H1 (cell line): ENCODE measurements at regions of chr6 and their contacts with region 1.

Region 1: GRCh38 chr6:161418463-161418945 is 144.6 kb upstream of the AGPAT4 start:
- DNase-seq: no peak
- H3K4me3 ChIP-seq: no peak overlapping the region
- H3K27ac ChIP-seq: no peak overlapping the region
- H3K4me1 ChIP-seq: peaks cover 0 to 4% (median under 1%) of the 10 kb centered on the region in 4 experiments; a peak in 3 of 7 replicates
- H3K27me3 ChIP-seq: no peaks in the 10 kb centered on the region
- CTCF ChIP-seq: peak in 2 of 3 experiments; percentile 57 to 69; a peak in 3 of 4 replicates
- EP300 ChIP-seq: no peak
- POLR2A ChIP-seq: no peak
- RAD21 ChIP-seq: peak; percentile 76 to 80

Region 2: GRCh38 chr6:161198176-161198575 is 220.3 kb before region 1 on chr6:
- CTCF ChIA-PET with region 1: no interaction called
- POLR2A ChIA-PET with region 1: no interaction called
- DNase-seq: no peak
- H3K4me3 ChIP-seq: no peak overlapping the region
- H3K27ac ChIP-seq: no peak overlapping the region
- H3K4me1 ChIP-seq: peaks cover 0 to 4% (median 0%) of the 10 kb centered on the region in 4 experiments; a peak in 1 of 7 replicates
- H3K27me3 ChIP-seq: no peaks in the 10 kb centered on the region
- CTCF ChIP-seq: no peak
- EP300 ChIP-seq: no peak
- POLR2A ChIP-seq: no peak
- RAD21 ChIP-seq: no peak

Region 3: DNA sequence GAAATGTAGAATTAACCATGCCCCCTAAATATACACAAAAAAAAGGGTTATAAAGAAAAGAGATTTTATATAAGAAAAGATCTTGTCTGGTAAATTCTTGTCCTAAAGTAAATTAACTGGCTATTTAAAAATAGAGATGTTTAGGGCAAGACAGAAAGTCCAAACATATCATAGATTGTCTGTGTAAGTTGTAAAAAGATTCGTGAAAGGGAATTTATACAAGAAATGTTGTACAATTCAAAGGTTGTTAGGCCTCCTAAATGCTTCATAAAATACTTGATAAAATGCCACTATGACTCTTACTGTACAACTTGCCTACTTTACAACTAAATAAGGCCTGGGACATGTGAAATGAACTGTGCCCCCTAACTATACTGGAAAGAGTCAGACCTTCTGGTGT is 122.7 kb before region 1 on chr6:
- CTCF ChIA-PET with region 1: no interaction called
- POLR2A ChIA-PET with region 1: no interaction called
- DNase-seq: no peak
- H3K4me3 ChIP-seq: no peak overlapping the region
- H3K27ac ChIP-seq: no peak overlapping the region
- H3K4me1 ChIP-seq: peaks cover 5 to 14% (median 12%) of the 10 kb centered on the region in 4 experiments
- H3K27me3 ChIP-seq: no peaks in the 10 kb centered on the region
- CTCF ChIP-seq: no peak
- EP300 ChIP-seq: no peak
- POLR2A ChIP-seq: no peak
- RAD21 ChIP-seq: no peak

Region 4: DNA sequence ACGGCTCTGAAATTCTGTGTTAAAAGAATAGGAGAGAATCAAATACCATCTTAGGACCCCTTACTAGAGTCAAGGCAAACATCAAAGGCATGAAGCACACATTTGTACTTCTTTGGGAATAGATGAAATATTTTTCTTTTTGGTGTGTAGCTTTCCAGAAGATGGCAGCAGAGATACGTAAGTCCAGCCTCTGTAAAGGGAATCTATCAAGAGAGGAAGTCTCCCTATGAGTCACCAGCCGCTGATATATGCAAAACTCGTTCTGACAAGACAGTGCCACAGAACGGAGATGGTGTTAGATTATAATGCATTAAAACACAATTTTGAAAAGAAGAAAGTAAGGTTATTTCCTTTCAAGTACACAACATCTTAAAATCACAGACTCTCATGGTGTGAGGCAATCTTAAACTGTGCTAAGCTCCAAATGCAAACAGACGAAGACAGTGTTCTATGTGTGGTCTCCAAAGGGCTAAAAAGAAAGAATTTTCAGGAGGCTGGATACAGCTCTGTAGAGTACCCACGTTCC is 24.6 kb before region 1 on chr6:
- CTCF ChIA-PET with region 1: interaction called, 86 read pairs
- POLR2A ChIA-PET with region 1: no interaction called
- DNase-seq: no peak
- H3K4me3 ChIP-seq: no peak overlapping the region
- H3K27ac ChIP-seq: no peak overlapping the region
- H3K4me1 ChIP-seq: no peaks in the 10 kb centered on the region; a peak in 2 of 7 replicates
- H3K27me3 ChIP-seq: no peaks in the 10 kb centered on the region; a peak in 1 of 7 replicates
- CTCF ChIP-seq: peak in 2 of 3 experiments; percentile 54; a peak in 2 of 4 replicates
- EP300 ChIP-seq: no peak
- POLR2A ChIP-seq: no peak
- RAD21 ChIP-seq: peak; percentile 79 to 83

Region 5: GRCh38 chr6:161439093-161439492 is 20.6 kb after region 1 on chr6:
- CTCF ChIA-PET with region 1: interaction called, 28 read pairs
- POLR2A ChIA-PET with region 1: no interaction called
- DNase-seq: no peak
- H3K4me3 ChIP-seq: no peak overlapping the region
- H3K27ac ChIP-seq: no peak overlapping the region
- H3K4me1 ChIP-seq: peaks cover under 1 to 8% (median 3%) of the 10 kb centered on the region in 4 experiments; a peak in 5 of 7 replicates
- H3K27me3 ChIP-seq: peaks cover 0 to 4% (median 0%) of the 10 kb centered on the region in 4 experiments; a peak in 1 of 7 replicates
- CTCF ChIP-seq: no peak
- EP300 ChIP-seq: no peak
- POLR2A ChIP-seq: no peak
- RAD21 ChIP-seq: no peak

Region 6: DNA sequence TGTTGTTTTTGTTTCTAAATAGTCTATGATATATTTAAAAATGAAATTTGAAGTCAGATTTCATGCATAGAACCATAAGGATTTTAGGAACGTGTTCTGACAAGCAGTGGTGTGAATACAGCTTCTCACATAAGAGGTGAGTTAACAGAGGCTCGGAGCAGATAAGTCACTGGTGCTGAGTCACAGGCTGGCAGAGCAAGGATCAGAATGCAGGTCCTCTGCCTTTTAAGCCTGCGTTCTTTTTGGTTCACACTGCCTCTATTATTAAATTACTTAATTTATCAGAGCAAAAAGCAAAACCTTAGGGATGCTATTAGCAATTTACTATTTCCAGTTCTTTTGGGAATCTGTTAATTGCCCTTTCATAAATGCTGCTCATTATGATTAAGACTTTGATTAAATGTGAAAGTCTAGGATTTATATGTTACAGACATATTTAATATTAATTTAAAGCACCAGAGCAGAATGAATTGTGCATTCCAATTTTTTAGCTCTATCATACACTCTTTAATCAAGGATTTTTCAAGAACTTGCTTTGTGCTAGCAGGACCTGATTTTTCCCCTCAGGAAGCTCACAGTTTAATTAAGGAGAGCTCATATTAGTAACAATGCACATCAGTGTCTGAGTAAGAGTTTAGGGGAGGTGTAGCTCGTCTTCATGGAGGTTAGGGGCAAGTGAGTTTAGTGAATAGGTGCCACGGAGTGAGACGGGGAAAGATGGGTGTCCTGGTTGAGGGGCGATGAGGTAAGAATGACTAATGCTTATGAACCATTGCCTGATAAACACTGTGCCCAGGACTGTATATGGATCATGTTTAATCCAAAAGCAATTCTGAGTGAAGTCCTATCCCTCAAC is 68.1 kb after region 1 on chr6:
- CTCF ChIA-PET with region 1: interaction called, 11 read pairs
- POLR2A ChIA-PET with region 1: no interaction called
- DNase-seq: no peak
- H3K4me3 ChIP-seq: no peak overlapping the region
- H3K27ac ChIP-seq: no peak overlapping the region
- H3K4me1 ChIP-seq: no peaks in the 10 kb centered on the region; a peak in 1 of 7 replicates
- H3K27me3 ChIP-seq: no peaks in the 10 kb centered on the region
- CTCF ChIP-seq: no peak
- EP300 ChIP-seq: no peak
- POLR2A ChIP-seq: no peak
- RAD21 ChIP-seq: no peak

Region 7: DNA sequence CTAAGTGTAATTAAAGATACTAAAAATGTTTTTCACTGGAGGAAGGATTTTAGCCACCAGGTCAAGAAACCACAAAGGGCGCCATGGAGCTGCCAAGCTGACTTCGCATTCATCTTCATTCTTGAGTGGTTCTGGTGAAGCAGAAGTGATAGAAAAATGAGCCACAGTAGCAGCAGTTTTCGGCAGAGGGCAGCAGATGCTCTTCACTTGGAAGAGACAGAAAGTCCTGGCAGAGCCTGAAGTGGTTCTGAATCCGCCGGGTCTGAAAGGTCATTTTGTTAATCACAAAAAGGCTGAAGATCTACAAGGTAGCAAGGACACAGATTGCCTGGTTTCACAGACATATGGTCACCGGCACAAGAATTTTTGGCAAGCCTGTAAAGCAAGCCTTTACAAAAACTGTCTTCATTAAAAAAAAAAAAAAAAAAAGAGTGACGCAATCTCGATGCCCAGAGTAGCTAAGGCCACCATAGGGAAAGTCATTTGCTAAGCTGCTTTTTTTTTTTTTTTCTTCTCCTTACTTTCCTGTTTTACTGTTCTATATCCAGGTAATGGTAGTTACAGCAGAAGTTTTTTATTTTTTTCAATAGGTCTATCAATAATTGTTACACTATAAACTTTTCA is 200.4 kb after region 1 on chr6:
- CTCF ChIA-PET with region 1: interaction called, 17 read pairs
- POLR2A ChIA-PET with region 1: no interaction called
- DNase-seq: peak in 1 of 2 experiments; percentile 31
- H3K4me3 ChIP-seq: no peak overlapping the region
- H3K27ac ChIP-seq: no peak overlapping the region
- H3K4me1 ChIP-seq: no peaks in the 10 kb centered on the region; a peak in 1 of 7 replicates
- H3K27me3 ChIP-seq: no peaks in the 10 kb centered on the region
- CTCF ChIP-seq: peak; percentile 20 to 71 (median 57); a peak in 3 of 4 replicates
- EP300 ChIP-seq: no peak
- POLR2A ChIP-seq: no peak
- RAD21 ChIP-seq: peak; percentile 78 to 79